ENCODE measurements at regions of chr3 and their contacts with region 1.

Region 1: DNA sequence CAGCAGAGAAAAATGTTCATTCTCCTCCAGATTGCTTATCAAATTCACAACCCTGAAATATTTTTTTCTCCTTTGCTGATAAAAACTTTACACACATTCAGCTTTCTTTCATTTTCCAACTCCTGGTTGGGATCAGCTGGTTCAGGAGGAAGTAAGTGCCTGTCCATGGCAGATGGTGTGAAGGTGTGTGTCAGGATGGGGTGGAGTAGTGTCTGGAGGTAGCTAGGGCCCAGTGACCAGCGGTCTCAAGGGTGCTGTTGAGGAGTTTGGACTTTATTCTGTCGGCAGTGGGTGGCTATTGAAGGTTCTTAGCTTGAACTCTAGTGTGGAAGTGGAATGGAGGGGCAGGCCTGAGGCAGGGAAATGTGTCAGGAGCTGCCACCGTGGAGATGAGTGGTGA is 46.9 kb upstream of the PTPN23 start:
- DNase-seq: no peak
- ATAC-seq: no peak
- H3K4me3 ChIP-seq: no peak overlapping the region
- H3K27ac ChIP-seq: no peak overlapping the region
- H3K4me1 ChIP-seq: no peaks in the 10 kb centered on the region
- H3K27me3 ChIP-seq: no peaks in the 10 kb centered on the region
- CTCF ChIP-seq: no peak

Region 2: GRCh38 chr3:47365213-47366153 is 31.6 kb after region 1 on chr3:
- CTCF ChIA-PET with region 1: no interaction called
- POLR2A ChIA-PET with region 1: no interaction called
- intact Hi-C with region 1: loop called (anchors 2 kb)
- DNase-seq: peak; percentile 86
- ATAC-seq: peak; percentile 79
- H3K4me3 ChIP-seq: no peak overlapping the region
- H3K27ac ChIP-seq: no peak overlapping the region
- H3K4me1 ChIP-seq: peaks cover 11% of the 10 kb centered on the region; the same call in 1 of the 2 replicates
- H3K27me3 ChIP-seq: no peaks in the 10 kb centered on the region
- CTCF ChIP-seq: no peak

Measured in PC-3 (cell line).